ENCODE measurements at regions of chr4 and their contacts with region 1.

Region 1: DNA sequence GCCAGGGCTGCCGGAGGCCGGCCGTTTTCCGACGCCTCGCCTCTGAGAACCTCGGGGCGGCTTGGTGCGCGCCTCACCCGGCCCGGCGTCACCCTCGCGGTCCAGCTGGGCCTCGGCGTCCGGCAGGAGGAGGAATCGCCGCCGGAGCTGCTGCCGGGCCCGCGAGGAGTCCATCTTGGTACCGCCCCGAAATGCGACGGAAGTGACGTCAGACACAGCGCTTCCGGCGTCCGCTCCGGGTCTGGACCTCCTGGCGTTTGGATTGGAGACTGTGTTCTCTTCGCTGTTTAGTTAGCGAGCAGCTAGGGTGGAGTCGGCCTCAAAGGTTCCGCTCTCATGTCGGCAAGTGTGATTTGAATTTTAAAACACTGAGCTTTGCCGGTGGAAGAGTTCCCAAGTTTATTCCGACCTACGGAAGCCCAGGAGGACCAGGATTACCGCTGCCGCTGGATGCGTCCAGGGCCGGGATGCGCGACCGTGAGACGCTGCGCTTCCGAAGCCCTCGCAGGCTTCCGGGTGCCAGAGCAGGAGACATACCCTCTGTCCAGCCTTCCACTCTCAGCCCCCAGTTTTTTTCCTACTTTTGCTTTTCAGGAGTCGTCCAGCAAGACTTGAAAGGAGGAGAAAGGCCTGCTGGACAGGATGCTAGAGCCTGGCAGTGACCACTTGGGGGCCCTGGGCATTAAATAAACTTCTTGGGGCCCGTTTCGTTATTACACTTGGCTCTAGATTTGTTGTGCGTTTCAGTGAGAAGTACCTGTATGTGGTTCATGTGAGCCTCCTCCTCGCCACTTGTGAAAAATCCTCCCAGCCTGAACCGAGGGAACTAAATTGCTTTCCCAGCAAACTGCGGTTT is at the start of gene TMEM128:
- DNase-seq: peak; percentile 95
- ATAC-seq: peak; percentile 97
- H3K4me3 Mint-ChIP-seq: peak within 1 kb of the TSS; percentile 81
- H3K27ac Mint-ChIP-seq: peak within 1 kb of the TSS; percentile 97
- H3K4me1 Mint-ChIP-seq: peaks cover 40% of the 10 kb centered on the region
- H3K27me3 Mint-ChIP-seq: no peaks in the 10 kb centered on the region
- total RNA-seq, gene TMEM128: 12.4 to 14.1 TPM

Region 2: GRCh38 chr4:4228356-4228668 is 19.9 kb before region 1 on chr4:
- CTCF ChIA-PET with region 1: no interaction called
- DNase-seq: no peak
- ATAC-seq: no peak
- H3K4me3 Mint-ChIP-seq: no peak overlapping the region
- H3K27ac Mint-ChIP-seq: no peak overlapping the region
- H3K4me1 Mint-ChIP-seq: peaks cover 5% of the 10 kb centered on the region
- H3K27me3 Mint-ChIP-seq: peaks cover 62% of the 10 kb centered on the region

Region 3: GRCh38 chr4:4260253-4260652 is 12.0 kb after region 1 on chr4:
- CTCF ChIA-PET with region 1: interaction called, 17 read pairs
- DNase-seq: no peak
- ATAC-seq: peak; percentile 99
- H3K4me3 Mint-ChIP-seq: no peak overlapping the region
- H3K27ac Mint-ChIP-seq: no peak overlapping the region
- H3K4me1 Mint-ChIP-seq: peaks cover 5% of the 10 kb centered on the region
- H3K27me3 Mint-ChIP-seq: no peaks in the 10 kb centered on the region

Region 4: DNA sequence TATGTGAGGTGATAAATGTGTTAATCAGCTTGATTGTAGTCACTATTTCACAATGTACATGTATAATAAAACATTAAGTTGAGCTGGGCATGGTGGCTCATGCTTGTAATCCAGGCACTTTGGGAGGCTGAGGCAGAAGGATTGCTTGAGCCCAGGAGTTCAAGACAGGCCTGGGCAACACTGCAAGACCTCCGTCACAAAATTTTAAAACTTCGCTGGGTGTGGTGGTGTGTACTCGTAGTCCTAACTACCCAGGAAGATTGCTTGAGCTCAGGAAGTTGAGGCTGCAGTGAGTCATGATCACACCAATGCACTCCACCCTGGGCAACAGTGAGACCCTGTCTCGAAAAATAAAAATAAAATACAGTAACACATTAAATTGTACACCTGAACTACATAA is 21.6 kb after region 1 on chr4:
- CTCF ChIA-PET with region 1: interaction called, 17 read pairs
- DNase-seq: peak; percentile 71
- ATAC-seq: peak; percentile 85
- H3K4me3 Mint-ChIP-seq: peak overlapping the region; percentile 68
- H3K27ac Mint-ChIP-seq: peak overlapping the region; percentile 98
- H3K4me1 Mint-ChIP-seq: peaks cover 30% of the 10 kb centered on the region
- H3K27me3 Mint-ChIP-seq: no peaks in the 10 kb centered on the region

Region 5: DNA sequence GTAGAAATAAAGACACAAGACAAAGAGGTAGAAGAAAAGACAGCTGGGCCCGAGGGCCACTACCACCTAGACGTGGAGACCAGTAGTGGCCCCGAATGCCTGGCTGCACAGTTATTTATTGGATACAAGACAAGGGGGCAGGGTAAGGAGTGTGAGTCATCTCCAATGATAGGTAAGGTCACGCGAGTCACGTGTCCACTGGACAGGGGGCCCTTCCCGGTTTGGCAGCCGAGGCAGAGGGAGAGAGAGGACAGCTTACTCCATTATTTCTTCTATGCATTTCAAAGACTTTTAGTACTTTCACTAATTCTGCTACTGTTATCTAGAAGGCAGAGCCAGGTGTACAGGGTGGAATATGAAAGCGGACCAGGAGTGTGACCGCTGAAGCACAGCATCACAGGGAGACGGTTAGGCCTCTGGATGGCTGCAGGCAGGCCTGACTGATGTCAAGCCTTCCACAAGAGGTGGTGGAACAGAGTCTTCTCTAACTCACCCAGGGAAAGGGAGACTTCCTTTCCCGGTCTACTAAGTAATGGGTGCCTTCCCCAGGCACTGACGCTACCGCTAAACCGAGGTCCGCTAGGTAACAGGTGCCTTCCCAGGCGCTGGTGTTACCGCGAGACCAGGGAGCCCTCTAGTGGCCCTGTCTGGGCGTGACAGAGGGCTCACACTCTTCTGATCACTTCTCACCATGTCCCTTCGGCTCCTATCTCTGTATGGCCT is 86.7 kb after region 1 on chr4:
- CTCF ChIA-PET with region 1: interaction called, 29 read pairs
- DNase-seq: peak; percentile 83
- ATAC-seq: peak; percentile 94
- H3K4me3 Mint-ChIP-seq: no peak overlapping the region
- H3K27ac Mint-ChIP-seq: no peak overlapping the region
- H3K4me1 Mint-ChIP-seq: peaks cover 3% of the 10 kb centered on the region
- H3K27me3 Mint-ChIP-seq: no peaks in the 10 kb centered on the region

Region 6: GRCh38 chr4:4430492-4431197 is 182.4 kb after region 1 on chr4:
- CTCF ChIA-PET with region 1: interaction called, 13 read pairs
- DNase-seq: peak; percentile 70
- ATAC-seq: peak; percentile 94
- H3K4me3 Mint-ChIP-seq: no peak overlapping the region
- H3K27ac Mint-ChIP-seq: no peak overlapping the region
- H3K4me1 Mint-ChIP-seq: peaks cover 3% of the 10 kb centered on the region
- H3K27me3 Mint-ChIP-seq: no peaks in the 10 kb centered on the region